ENCODE measurements at regions of chr2 and their contacts with region 1.

Region 1: DNA sequence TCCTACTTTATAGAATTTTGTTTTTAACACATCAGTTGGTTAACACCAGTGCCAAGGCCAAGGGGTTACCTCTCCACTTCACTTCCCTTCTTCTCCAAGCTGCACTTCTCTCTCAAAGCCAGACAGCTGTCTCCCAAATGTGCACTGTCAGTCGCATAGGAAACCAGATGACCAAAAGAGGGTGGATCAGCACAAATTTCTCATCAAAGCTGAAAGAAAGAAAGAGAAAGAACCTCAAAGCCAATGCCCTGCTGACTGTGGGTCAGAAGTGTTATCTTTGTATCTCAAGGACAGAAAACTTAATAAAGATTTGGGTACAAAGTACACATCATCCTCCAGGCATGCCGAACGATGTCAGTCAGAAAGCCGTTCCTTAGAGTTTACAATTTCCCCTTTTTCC is 32.2 kb downstream of the SPATS2L start:
- H3K4me3 Mint-ChIP-seq: no peak overlapping the region
- H3K27ac Mint-ChIP-seq: no peak overlapping the region
- H3K4me1 Mint-ChIP-seq: peaks cover 23% of the 10 kb centered on the region
- H3K27me3 Mint-ChIP-seq: no peaks in the 10 kb centered on the region

Region 2: DNA sequence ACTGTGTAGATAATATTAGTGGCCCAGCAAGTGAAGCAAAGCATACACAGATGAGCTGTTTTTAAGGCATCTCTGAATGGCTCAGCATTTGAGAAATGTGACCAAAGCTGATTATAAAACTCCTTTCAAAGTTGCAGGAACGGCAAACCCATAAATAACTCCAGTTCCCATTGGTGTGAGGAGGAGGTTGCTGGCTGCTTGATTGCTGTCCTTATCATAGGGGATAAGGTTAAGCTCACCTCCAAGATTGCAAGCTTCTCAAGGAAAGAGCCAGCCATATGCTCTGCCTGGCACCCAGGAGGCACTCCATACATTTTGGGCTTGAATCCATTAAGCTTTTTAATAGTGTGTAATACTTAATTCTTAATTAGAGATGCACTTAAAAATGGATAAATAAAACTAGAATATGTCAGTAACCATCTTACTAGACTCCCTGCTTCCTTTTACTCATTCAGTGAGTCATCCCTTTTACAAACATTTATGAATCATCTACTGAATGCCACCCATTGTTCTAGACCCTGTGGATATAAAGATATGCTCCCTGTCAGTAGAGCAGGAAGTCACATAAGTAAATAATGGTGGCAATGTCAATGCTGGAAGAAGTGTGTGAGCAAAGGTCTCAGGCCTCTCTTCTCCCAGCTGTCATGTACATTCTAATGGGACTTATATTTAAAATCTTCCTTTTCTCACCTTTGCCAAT is 67.0 kb after region 1 on chr2:
- intact Hi-C with region 1: loop called (anchors 10 kb)
- H3K4me3 Mint-ChIP-seq: no peak overlapping the region
- H3K27ac Mint-ChIP-seq: no peak overlapping the region
- H3K4me1 Mint-ChIP-seq: peaks cover 65% of the 10 kb centered on the region
- H3K27me3 Mint-ChIP-seq: no peaks in the 10 kb centered on the region

Region 3: GRCh38 chr2:200422532-200423261 is 84.0 kb after region 1 on chr2:
- intact Hi-C with region 1: no loop called
- H3K4me3 Mint-ChIP-seq: no peak overlapping the region
- H3K27ac Mint-ChIP-seq: no peak overlapping the region
- H3K4me1 Mint-ChIP-seq: no peaks in the 10 kb centered on the region
- H3K27me3 Mint-ChIP-seq: no peaks in the 10 kb centered on the region